PC-9 (cell line): ENCODE measurements at regions of chr9 and their contacts with region 1.

Region 1: DNA sequence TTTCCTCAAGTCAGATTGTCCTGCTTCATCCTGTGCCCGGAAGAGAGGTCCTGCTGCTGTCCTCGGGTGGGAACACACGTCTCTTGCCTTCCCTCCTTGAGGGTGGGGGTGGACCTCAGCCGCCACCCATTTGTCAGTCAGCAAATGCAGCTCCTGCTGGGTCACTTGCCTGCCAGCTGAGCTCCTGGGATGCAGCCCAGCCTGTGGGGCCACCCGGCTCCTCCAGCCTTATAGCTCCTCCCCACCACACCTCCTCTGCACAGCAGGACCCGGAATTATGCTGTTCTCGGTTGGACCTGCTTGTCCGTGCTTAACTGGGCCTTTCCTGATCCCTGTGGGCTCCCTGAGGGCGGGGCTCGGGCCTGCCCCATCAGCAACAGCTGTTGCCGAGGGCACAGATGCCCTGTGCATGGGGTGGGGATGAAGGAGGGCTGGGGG is 52.7 kb downstream of the RXRA start:
- DNase-seq: peak; percentile 89 to 94
- H3K4me3 ChIP-seq: peak overlapping the region; percentile 36; the same call in 1 of the 2 replicates
- H3K27ac ChIP-seq: peak overlapping the region; percentile 94
- H3K4me1 ChIP-seq: peaks cover 95% of the 10 kb centered on the region
- H3K27me3 ChIP-seq: no peaks in the 10 kb centered on the region
- CTCF ChIP-seq: no peak

Region 2: GRCh38 chr9:134325817-134326723 is 52.9 kb before region 1 on chr9 and contains the start of gene RXRA:
- CTCF ChIA-PET with region 1: interaction called, 9 read pairs
- POLR2A ChIA-PET with region 1: interaction called, 15 read pairs
- intact Hi-C with region 1: loop called (anchors 1 kb)
- DNase-seq: peak; percentile 58 to 93
- H3K4me3 ChIP-seq: peak within 1 kb of the TSS; percentile 87
- H3K27ac ChIP-seq: peak within 1 kb of the TSS; percentile 66
- H3K4me1 ChIP-seq: peaks cover 32% of the 10 kb centered on the region
- H3K27me3 ChIP-seq: no peaks in the 10 kb centered on the region
- CTCF ChIP-seq: no peak
- total RNA-seq, gene RXRA: 116 and 146 TPM in 2 replicates

Region 3: DNA sequence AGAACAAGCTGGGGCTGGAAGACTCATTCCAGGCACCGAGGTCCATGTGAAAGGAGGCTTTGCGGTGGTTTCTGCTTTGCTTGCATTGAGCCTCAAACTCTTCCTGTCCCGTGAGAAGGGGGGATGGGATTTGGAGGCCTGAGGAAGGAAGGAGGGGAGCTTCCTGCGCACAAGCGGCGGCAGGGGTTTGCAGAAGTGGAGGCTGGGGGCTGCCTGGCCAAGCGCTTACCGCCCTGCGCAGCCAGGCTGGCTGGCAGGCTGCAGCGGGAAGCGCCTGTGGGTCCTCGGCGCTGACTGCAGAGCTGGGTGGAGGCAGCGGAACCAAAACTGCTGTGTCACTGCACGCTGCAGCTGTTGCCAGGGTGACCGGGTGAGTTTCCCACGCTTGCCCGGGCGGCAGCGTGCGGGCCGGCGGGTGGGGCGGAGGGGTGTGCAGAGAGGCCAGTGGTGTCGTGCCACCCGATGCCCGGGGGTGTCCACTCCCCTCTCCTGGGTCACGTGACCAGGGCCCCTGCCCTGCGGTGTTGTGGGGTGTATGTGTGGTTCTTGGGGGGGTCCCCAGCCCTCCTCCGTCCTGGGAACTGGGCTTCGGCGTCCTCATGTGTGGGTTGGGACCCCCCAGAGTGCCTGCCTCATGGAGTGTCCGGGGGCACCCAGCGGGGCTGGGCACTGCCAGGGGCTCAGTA is 28.3 kb after region 1 on chr9:
- CTCF ChIA-PET with region 1: interaction called, 4 read pairs
- POLR2A ChIA-PET with region 1: interaction called, 6 read pairs
- intact Hi-C with region 1: loop called (anchors 1 kb)
- DNase-seq: peak; percentile 89 to 98
- H3K4me3 ChIP-seq: peak overlapping the region; percentile 47
- H3K27ac ChIP-seq: peak overlapping the region; percentile 97
- H3K4me1 ChIP-seq: peaks cover 79% of the 10 kb centered on the region
- H3K27me3 ChIP-seq: no peaks in the 10 kb centered on the region
- CTCF ChIP-seq: no peak

Region 4: DNA sequence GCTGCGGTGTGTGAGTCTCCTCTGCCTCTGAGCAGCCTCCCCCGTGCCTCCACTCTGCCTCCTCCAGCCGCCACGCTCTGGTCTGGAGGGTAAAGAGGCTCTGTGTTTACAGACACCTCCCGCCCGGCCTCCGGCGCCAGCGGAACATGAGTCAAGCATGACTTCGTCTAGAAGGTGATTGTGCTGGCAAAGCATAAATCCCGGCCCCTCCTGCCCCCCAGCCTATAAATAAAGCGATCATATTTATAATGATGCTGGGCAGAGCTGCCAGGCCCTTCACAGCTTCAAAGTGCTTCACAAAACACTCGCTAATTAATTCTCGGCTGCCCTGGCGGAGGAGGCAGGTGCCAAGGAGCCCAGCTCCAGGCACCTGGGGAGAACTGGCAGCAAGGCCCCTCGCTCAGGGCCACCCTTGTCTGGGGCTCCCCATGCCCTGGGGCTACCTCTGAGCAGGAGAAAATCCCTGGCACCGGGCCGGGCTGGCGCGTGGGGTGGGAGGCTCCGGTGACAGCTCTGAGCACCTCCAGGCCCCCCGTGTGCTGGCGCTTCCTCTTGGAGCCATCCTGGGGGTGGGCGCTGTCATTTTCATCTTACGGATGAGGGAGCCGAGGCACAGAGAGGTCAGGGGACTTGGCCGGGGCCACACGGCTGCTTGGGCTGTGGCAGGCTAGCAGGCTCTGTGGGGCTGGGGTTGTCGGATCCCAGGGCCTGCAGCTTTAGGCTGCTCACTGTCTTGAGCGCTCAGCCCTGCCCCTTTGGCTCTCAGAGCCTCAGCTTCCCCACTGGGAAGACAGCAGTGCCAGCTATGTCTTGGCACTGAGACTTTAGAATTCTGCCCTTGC is 35.2 kb after region 1 on chr9:
- CTCF ChIA-PET with region 1: no interaction called
- POLR2A ChIA-PET with region 1: interaction called, 5 read pairs
- intact Hi-C with region 1: loop called (anchors 1 kb)
- DNase-seq: peak in 1 of 2 experiments; percentile 81
- H3K4me3 ChIP-seq: no peak overlapping the region
- H3K27ac ChIP-seq: no peak overlapping the region
- H3K4me1 ChIP-seq: peaks cover 47% of the 10 kb centered on the region
- H3K27me3 ChIP-seq: no peaks in the 10 kb centered on the region
- CTCF ChIP-seq: no peak